Aorta (tissue), 5 donors: ENCODE measurements at regions of chr3 and their contacts with region 1.

Region 1: GRCh38 chr3:14780927-14781507 is 37.7 kb upstream of the FGD5 start:
- DNase-seq: peak in 1 of 2 donors; percentile 76
- ATAC-seq: no peak
- H3K4me3 ChIP-seq: no peak overlapping the region
- H3K27ac ChIP-seq: no peak overlapping the region
- H3K4me1 ChIP-seq: no peaks in the 10 kb centered on the region
- H3K27me3 ChIP-seq: no peaks in the 10 kb centered on the region

Region 2: DNA sequence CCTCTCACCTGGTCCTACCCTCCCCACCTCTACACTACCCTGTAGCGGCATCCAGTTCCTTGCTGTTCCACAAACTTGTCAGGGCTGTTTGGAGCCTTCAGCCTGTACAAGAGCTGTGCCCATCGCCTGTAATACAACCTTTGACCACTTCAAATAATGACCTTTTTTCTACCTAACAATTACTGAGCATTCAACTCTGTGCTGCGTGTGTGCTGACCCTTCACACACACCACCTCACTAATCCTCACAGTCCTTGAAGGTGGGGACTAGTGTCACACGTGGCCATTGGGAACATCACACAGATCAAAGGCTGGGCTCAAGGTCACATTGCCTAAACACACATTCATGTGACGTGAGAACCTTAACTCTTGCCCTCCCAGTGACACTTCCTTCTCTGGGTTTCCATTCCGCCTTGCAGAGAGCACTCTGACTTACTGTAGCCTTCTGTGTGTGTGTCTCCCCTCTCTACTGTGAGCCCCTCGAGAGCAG is 103.0 kb before region 1 on chr3:
- intact Hi-C with region 1: loop called in 1 of 2 experiments (anchors 10 kb)
- DNase-seq: no peak
- ATAC-seq: no peak
- H3K4me3 ChIP-seq: no peak overlapping the region
- H3K27ac ChIP-seq: no peak overlapping the region
- H3K4me1 ChIP-seq: no peaks in the 10 kb centered on the region
- H3K27me3 ChIP-seq: no peaks in the 10 kb centered on the region

Region 3: DNA sequence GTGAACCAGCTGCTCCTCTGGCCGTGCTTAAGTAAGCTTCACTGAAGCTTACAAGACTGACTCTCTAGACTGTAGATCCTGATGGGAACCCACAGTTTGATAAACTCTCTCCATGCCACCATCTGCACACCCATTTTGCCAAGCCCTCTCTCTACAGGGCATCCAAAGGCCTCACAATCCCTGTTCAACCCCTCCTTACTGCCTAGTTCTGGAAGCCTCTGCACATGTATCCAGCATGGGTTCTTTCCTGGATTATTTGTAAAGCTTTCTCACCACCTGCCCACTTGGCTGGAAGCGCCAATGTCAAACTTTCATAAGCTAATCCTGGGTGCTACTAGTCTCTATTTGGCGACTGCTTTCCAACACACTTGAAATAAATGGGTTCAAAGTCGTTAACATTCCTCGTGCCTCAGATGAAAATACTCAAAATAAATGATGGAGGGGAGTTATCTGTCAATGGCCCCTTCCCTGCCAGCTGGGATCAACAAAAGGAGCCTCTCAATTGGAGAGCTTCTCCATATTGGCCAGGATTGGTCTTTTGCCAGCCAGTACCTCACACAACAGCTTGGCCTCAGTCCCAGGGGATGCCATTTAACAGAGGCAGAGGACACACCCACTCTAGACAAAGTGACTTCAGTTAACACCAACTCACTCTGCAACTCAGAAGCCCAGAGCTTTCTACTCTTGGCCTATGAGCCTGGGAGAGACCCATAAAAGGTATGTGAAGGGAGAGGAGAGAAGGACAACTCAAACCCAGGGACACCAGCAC is 503.3 kb after region 1 on chr3:
- intact Hi-C with region 1: no loop called
- DNase-seq: peak in 1 of 2 donors; percentile 43
- ATAC-seq: no peak
- H3K4me3 ChIP-seq: no peak overlapping the region
- H3K27ac ChIP-seq: no peak overlapping the region
- H3K4me1 ChIP-seq: no peaks in the 10 kb centered on the region
- H3K27me3 ChIP-seq: no peaks in the 10 kb centered on the region